ENCODE measurements at regions of chr5 and their contacts with region 1.

Region 1: DNA sequence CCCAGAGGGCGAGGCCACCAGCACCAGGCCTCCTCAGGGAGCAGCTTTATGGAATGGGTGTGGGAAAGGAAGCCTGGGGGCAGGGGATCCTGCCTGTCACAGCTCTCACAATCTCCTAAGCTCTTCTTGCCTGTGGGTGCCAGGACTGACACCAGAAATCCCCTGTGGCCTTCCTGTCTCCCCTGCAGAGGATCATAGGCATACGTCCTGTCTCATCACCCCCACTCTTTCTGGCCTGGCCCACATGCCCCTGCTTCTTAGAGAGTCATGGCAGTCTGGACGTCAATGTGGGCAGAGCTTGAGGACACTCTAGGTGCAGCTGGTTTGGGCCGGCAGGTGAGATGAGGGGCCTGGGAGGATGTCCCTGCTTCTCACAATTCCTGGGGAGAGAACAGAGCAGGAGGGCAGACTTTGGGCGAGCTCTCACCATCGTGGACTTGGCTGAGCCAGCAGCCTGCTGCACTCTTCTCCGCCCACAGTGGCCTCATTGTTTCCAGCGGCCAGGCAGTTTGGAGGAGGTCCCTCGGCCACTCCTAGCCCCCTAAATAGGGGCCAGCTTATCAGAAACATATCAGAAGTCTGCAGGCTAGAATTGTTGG is 67.3 kb upstream of the ZFR start:
- DNase-seq: no peak
- H3K4me3 ChIP-seq: no peak overlapping the region
- H3K27ac ChIP-seq: no peak overlapping the region
- H3K4me1 ChIP-seq: no peaks in the 10 kb centered on the region
- H3K27me3 ChIP-seq: no peaks in the 10 kb centered on the region
- CTCF ChIP-seq: no peak
- EP300 ChIP-seq: no peak
- POLR2A ChIP-seq: no peak

Region 2: DNA sequence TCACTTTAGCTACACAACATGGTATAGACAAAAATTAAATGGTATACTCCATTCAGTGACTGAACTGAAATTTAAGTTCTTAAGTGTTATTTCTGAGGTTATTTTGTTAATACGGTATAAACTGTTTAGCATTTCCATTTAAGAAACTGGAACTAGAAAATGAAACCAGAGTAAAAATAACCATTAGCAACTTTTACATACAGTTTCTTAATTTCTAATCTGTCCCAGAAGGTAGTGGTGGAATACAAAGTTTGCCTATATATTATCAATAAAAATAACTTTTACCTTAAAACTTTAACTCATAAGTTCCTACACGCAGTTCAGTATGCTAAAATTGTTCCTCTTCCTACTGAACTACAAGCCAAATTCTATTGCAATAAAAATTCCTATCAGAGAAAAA is 348.1 kb before region 1 on chr5:
- in situ Hi-C with region 1: no loop called
- intact Hi-C with region 1: loop called (anchors 10 kb)
- DNase-seq: no peak
- H3K4me3 ChIP-seq: no peak overlapping the region
- H3K27ac ChIP-seq: peak overlapping the region; percentile 38 to 99 (median 80)
- H3K4me1 ChIP-seq: peaks cover 32 to 76% (median 57%) of the 10 kb centered on the region in 4 donors
- H3K27me3 ChIP-seq: no peaks in the 10 kb centered on the region
- CTCF ChIP-seq: no peak
- EP300 ChIP-seq: no peak
- POLR2A ChIP-seq: no peak

Measured in transverse colon (tissue), 4 donors.